Caco-2 (cell line): ENCODE measurements at regions of chr13 and their contacts with region 1.

Region 1: DNA sequence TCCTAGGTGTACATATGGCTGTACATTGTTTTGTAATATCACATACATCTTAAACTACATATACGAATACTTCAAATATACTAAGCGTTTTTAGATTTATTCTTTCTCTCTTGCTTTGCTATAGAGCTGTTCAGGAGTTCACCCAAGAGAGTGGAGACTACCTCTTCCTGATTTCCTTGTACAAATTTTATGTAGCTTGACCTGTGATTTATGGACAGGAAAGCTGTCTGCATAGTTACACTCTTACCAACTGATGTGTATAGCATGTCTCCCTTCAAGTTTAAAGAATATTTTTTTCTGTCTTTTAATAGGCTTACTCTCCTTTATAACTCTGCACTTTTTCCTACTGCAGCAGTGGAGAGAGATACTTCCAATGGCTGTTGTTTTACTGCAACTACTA is 428.7 kb downstream of the NDFIP2 start:
- DNase-seq: no peak
- H3K4me3 ChIP-seq: no peak overlapping the region
- H3K4me3 Mint-ChIP-seq: no peak overlapping the region
- H3K27ac Mint-ChIP-seq: no peak overlapping the region
- H3K4me1 ChIP-seq: peaks cover 21% of the 10 kb centered on the region
- H3K4me1 Mint-ChIP-seq: peaks cover 36% of the 10 kb centered on the region
- H3K27me3 ChIP-seq: no peaks in the 10 kb centered on the region
- H3K27me3 Mint-ChIP-seq: no peaks in the 10 kb centered on the region
- CTCF ChIP-seq: no peak

Region 2: GRCh38 chr13:79799059-79799867 is 110.4 kb before region 1 on chr13:
- CTCF ChIA-PET with region 1: no interaction called
- POLR2A ChIA-PET with region 1: no interaction called
- intact Hi-C with region 1: loop called (anchors 5 kb)
- DNase-seq: no peak
- H3K4me3 ChIP-seq: no peak overlapping the region
- H3K4me3 Mint-ChIP-seq: no peak overlapping the region
- H3K27ac Mint-ChIP-seq: no peak overlapping the region
- H3K4me1 ChIP-seq: peaks cover 52% of the 10 kb centered on the region
- H3K4me1 Mint-ChIP-seq: peaks cover 26% of the 10 kb centered on the region
- H3K27me3 ChIP-seq: no peaks in the 10 kb centered on the region
- H3K27me3 Mint-ChIP-seq: no peaks in the 10 kb centered on the region
- CTCF ChIP-seq: no peak

Region 3: GRCh38 chr13:79874396-79875360 is 35.0 kb before region 1 on chr13:
- CTCF ChIA-PET with region 1: no interaction called
- POLR2A ChIA-PET with region 1: no interaction called
- intact Hi-C with region 1: loop called (anchors 5 kb)
- DNase-seq: no peak
- H3K4me3 ChIP-seq: no peak overlapping the region
- H3K4me3 Mint-ChIP-seq: no peak overlapping the region
- H3K27ac Mint-ChIP-seq: no peak overlapping the region
- H3K4me1 ChIP-seq: peaks cover 17% of the 10 kb centered on the region
- H3K4me1 Mint-ChIP-seq: peaks cover 21% of the 10 kb centered on the region
- H3K27me3 ChIP-seq: no peaks in the 10 kb centered on the region
- H3K27me3 Mint-ChIP-seq: no peaks in the 10 kb centered on the region
- CTCF ChIP-seq: no peak